ENCODE measurements at regions of chr10 and their contacts with region 1.

Region 1: GRCh38 chr10:15433850-15434537 is 62.9 kb upstream of the FAM171A1 start:
- DNase-seq: peak in 1 of 10 donors; percentile 17

Region 2: GRCh38 chr10:15719899-15720634 is 286.1 kb after region 1 on chr10 and contains the start of gene ITGA8:
- intact Hi-C with region 1: loop called (anchors 5 kb)
- DNase-seq: peak in 2 of 10 donors; percentile 22 to 83

Region 3: GRCh38 chr10:15824498-15824897 is 390.5 kb after region 1 on chr10:
- intact Hi-C with region 1: loop called (anchors 5 kb)
- DNase-seq: no peak

Region 4: GRCh38 chr10:16020836-16021235 is 586.8 kb after region 1 on chr10:
- intact Hi-C with region 1: no loop called
- DNase-seq: no peak

Measured in posterior cingulate gyrus (tissue), 11 donors.